CD8-positive, alpha-beta memory T cell (primary cell): ENCODE measurements at regions of chr10 and their contacts with region 1.

Region 1: GRCh38 chr10:92848441-92849233 is at the start of gene EXOC6:
- DNase-seq: peak; percentile 80 to 92 (median 88)
- H3K4me3 ChIP-seq: peak within 1 kb of the TSS; percentile 72
- H3K4me3 Mint-ChIP-seq: peak within 1 kb of the TSS; percentile 88 to 92 (median 91)
- H3K27ac ChIP-seq: peak within 1 kb of the TSS; percentile 72
- H3K27ac Mint-ChIP-seq: peak within 1 kb of the TSS; percentile 88 to 94 (median 91)
- H3K4me1 ChIP-seq: peaks cover 13% of the 10 kb centered on the region
- H3K4me1 Mint-ChIP-seq: peaks cover 13 to 30% (median 28%) of the 10 kb centered on the region in 3 donors
- H3K27me3 ChIP-seq: no peaks in the 10 kb centered on the region
- H3K27me3 Mint-ChIP-seq: no peaks in the 10 kb centered on the region
- total RNA-seq, gene EXOC6: 10.6 to 10.9 TPM

Region 2: DNA sequence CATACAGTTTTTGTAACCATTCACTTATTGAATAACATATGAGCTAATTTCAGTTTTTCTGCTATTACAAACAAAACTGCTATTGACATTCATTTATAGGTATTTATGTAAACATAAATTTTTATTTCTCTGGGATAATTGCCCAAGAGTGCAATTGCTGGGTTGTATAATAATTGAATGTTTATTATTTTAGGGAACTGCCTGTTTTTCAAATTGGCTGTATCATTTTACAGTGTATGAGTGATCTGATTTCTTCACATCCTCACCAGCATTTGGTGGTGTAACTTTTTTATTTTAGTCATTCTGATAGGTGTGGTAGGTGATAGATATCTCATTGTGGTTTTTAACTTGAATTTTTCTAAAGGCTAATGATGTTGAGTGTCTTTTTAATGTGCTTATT is 229.3 kb before region 1 on chr10:
- CTCF ChIA-PET with region 1: no interaction called
- POLR2A ChIA-PET with region 1: no interaction called
- DNase-seq: no peak
- H3K4me3 ChIP-seq: no peak overlapping the region
- H3K4me3 Mint-ChIP-seq: no peak overlapping the region
- H3K27ac ChIP-seq: no peak overlapping the region
- H3K27ac Mint-ChIP-seq: peak overlapping the region in 1 of 8 donors; percentile 32
- H3K4me1 ChIP-seq: no peaks in the 10 kb centered on the region
- H3K4me1 Mint-ChIP-seq: peaks cover 0 to 16% (median 3%) of the 10 kb centered on the region in 3 donors
- H3K27me3 ChIP-seq: no peaks in the 10 kb centered on the region
- H3K27me3 Mint-ChIP-seq: no peaks in the 10 kb centered on the region

Region 3: GRCh38 chr10:92832998-92833650 is 15.5 kb before region 1 on chr10:
- CTCF ChIA-PET with region 1: interaction called, 21 read pairs
- POLR2A ChIA-PET with region 1: interaction called, 4 read pairs
- DNase-seq: no peak
- H3K4me3 ChIP-seq: no peak overlapping the region
- H3K4me3 Mint-ChIP-seq: no peak overlapping the region
- H3K27ac ChIP-seq: no peak overlapping the region
- H3K27ac Mint-ChIP-seq: no peak overlapping the region
- H3K4me1 ChIP-seq: no peaks in the 10 kb centered on the region
- H3K4me1 Mint-ChIP-seq: peaks cover 8 to 14% (median 9%) of the 10 kb centered on the region in 3 donors
- H3K27me3 ChIP-seq: no peaks in the 10 kb centered on the region
- H3K27me3 Mint-ChIP-seq: peaks cover 2 to 4% of the 10 kb centered on the region in 2 donors

Region 4: GRCh38 chr10:92876509-92877036 is 27.9 kb after region 1 on chr10:
- CTCF ChIA-PET with region 1: interaction called, 14 read pairs
- POLR2A ChIA-PET with region 1: no interaction called
- DNase-seq: no peak
- H3K4me3 ChIP-seq: no peak overlapping the region
- H3K4me3 Mint-ChIP-seq: peak overlapping the region in 3 of 7 donors; percentile 9 to 53 (median 12)
- H3K27ac ChIP-seq: no peak overlapping the region
- H3K27ac Mint-ChIP-seq: peak overlapping the region in 3 of 8 donors; percentile 46 to 74 (median 50)
- H3K4me1 ChIP-seq: peaks cover 11% of the 10 kb centered on the region
- H3K4me1 Mint-ChIP-seq: peaks cover 36 to 54% (median 47%) of the 10 kb centered on the region in 3 donors
- H3K27me3 ChIP-seq: no peaks in the 10 kb centered on the region
- H3K27me3 Mint-ChIP-seq: no peaks in the 10 kb centered on the region